IMR-90 (cell line): ENCODE measurements at regions of chr5 and their contacts with region 1.

Region 1: GRCh38 chr5:171850324-171851285 is 65.0 kb downstream of the SMIM23 start:
- DNase-seq: no peak
- ATAC-seq: peak; percentile 51
- H3K4me3 ChIP-seq: no peak overlapping the region
- H3K27ac ChIP-seq: no peak overlapping the region
- H3K4me1 ChIP-seq: no peaks in the 10 kb centered on the region
- H3K27me3 ChIP-seq: no peaks in the 10 kb centered on the region
- CTCF ChIP-seq: 0 out of 2 replicates have a peak, but pooled peaks have one; percentile 16
- POLR2A ChIP-seq: no peak
- RAD21 ChIP-seq: peak; percentile 35

Region 2: GRCh38 chr5:171450423-171451331 is 399.9 kb before region 1 on chr5:
- CTCF ChIA-PET with region 1: no interaction called
- POLR2A ChIA-PET with region 1: no interaction called
- dilution Hi-C with region 1: no loop called
- in situ Hi-C with region 1: loop called (anchors 25 kb)
- intact Hi-C with region 1: no loop called
- DNase-seq: peak; percentile 73
- ATAC-seq: peak; percentile 91
- H3K4me3 ChIP-seq: peak overlapping the region; percentile 51
- H3K27ac ChIP-seq: peak overlapping the region; percentile 90
- H3K4me1 ChIP-seq: peaks cover 7% of the 10 kb centered on the region; the same call in 1 of the 2 replicates
- H3K27me3 ChIP-seq: no peaks in the 10 kb centered on the region; the same call in 1 of the 2 replicates
- CTCF ChIP-seq: no peak
- POLR2A ChIP-seq: peak; percentile 38; the same call in 1 of the 2 replicates
- RAD21 ChIP-seq: no peak

Region 3: DNA sequence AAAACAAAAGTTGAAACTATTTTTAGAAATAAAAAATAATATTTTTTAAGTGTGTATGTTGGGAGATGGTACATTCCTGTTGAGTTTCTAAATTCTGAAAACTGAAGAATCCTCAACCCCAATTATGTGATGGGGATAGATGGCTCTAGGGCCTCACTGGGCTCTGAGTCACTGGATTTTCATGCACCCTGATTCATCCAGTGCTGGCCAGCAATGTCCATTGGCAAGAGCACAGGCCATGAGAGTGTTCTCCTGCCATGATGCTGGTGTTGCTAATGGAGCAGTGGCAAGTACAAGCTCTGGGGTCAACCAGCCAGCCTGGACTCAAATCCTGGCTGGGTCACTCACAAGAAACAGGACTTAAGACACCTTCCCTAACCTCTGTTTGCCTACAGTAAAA is 41.7 kb before region 1 on chr5:
- CTCF ChIA-PET with region 1: no interaction called
- POLR2A ChIA-PET with region 1: no interaction called
- dilution Hi-C with region 1: no loop called
- in situ Hi-C with region 1: no loop called
- intact Hi-C with region 1: loop called (anchors 1 kb)
- DNase-seq: peak; percentile 71
- ATAC-seq: peak; percentile 83
- H3K4me3 ChIP-seq: no peak overlapping the region
- H3K27ac ChIP-seq: no peak overlapping the region
- H3K4me1 ChIP-seq: no peaks in the 10 kb centered on the region
- H3K27me3 ChIP-seq: peaks cover 16% of the 10 kb centered on the region
- CTCF ChIP-seq: no peak
- POLR2A ChIP-seq: no peak
- RAD21 ChIP-seq: no peak